Activated CD4-positive, alpha-beta T cell treated with anti-CD3 and anti-CD28 coated beads for 36 hours (primary cell): ENCODE measurements at regions of chr1 and their contacts with region 1.

Region 1: DNA sequence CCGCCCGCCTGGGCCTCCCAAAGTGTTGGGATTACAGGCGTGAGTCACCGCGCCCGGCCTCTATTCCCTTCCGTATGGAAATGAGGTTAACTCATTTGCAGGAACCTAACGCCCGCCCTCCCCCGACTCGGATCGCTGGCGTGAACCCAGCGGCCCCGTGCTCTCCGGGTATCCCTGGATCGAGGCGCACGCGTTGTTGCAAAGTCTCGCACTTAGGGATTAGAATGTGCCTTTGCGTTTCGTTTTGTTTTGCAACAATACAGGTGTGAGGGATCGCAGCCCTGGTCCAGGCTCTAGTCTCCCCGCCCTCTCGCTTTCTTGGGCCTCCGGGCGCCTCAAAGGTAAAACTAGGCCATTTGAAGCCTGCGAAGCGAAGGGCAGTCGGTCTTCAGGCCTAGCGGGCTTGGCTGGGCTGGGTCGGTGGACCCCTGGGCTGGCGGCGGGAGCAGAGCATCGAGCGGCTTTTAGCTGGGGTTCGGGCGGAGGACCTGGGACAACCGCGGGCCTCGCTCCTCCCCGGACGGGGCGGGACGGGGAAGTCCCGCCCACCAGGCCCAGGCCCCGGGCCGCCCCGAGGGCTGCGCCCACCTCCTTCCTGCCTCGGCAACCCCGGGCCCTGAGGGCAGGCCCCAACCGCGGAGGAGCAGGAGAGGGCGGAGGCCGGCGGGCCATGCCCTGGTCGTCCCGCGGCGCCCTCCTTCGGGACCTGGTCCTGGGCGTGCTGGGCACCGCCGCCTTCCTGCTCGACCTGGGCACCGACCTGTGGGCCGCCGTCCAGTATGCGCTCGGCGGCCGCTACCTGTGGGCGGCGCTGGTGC is at the start of gene XKR8:
- DNase-seq: peak; percentile 89
- ATAC-seq: peak; percentile 98
- H3K4me3 Mint-ChIP-seq: peak within 1 kb of the TSS; percentile 77
- H3K27ac Mint-ChIP-seq: peak within 1 kb of the TSS; percentile 84
- H3K4me1 Mint-ChIP-seq: peaks cover 17% of the 10 kb centered on the region
- H3K27me3 Mint-ChIP-seq: no peaks in the 10 kb centered on the region
- total RNA-seq, gene XKR8: 4.2 to 6.0 TPM

Region 2: DNA sequence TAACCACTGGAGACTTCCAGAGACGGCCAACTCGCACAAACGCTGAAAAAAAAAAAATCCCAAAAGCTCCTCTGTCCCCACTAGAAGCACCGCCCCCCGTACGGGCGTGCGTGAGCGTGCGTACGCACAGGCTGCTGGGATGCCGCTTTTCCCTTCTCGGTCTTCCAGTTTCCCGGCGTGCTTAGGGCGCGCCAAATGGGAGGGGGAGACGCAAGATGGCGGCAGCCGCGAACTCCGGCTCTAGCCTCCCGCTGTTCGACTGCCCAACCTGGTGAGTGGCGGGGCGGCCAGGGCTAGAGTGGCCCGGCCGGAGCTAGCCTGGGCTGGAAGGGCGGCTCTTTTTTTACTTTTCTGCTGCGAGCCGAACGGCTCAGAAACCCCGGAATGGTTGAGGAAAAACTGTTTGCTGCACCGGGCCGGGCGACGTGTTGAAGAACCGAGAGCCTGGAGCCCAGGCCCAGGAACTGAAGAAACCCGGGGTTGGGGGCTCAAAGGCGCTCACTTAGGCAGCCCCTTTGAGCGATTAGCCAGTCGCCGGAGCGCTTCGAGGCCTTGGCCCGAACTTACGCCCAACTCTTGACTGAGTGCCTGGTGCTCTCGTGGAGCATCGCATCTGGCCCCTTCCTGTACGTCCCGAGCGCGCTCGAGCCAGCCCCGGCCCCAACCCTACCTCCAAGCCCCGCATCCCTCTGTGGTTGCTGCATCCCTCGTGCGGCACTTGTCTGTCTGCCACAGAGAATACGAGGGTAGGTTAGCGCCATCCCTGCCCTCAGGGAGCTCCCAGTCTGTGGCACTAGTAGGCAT is 128.8 kb before region 1 on chr1 and contains the start of gene PPP1R8:
- CTCF ChIA-PET with region 1: no interaction called
- POLR2A ChIA-PET with region 1: no interaction called
- intact Hi-C with region 1: loop called in 1 of 2 experiments (anchors 1 kb)
- DNase-seq: peak; percentile 94
- ATAC-seq: peak; percentile 99
- H3K4me3 Mint-ChIP-seq: peak within 1 kb of the TSS; percentile 94
- H3K27ac Mint-ChIP-seq: peak within 1 kb of the TSS; percentile 94
- H3K4me1 Mint-ChIP-seq: peaks cover 40% of the 10 kb centered on the region
- H3K27me3 Mint-ChIP-seq: no peaks in the 10 kb centered on the region
- total RNA-seq, gene PPP1R8: 49.6 to 65.9 TPM

Region 3: DNA sequence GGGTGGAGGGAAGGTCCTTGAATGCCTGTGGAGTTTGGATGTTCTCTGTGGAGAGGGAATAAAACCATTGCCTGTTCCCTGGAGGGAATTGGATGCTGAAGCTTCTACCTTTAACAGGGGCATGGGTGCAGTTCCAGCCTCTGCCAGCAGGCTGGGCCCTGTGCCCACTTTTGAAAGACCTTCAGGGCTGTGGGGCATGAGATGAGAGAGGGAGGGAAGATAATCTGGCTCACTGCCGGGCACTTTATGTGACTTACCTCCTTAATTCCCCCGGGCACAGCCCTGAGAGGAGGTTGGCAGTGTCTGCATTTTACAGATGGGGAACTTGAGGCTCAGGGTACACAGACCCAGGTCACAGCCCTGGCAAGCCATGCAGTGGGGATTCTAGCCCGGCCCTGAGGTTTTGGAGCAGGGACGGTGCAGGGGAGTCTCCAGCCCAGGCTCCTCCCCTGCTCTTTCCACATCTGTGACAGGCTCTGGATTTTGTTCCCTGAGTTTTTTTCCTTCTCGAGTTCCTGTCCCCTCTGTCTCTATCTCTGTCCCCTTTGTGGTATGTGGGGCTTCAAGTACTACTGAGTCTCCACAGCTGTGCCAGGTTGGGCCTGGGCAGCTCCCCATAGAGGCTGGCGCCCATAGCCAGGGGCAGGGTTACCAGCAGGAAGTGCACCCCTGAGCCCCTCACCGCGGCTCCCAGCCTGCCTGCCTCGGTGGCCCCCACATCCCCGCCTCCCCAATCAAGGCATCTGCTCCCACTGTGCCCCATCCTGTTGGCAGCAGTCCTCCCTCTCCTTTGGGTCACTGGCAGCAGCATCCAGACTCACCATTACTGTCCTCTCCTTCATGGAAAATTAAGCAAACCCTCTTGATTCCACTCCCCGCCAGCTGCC is 101.3 kb before region 1 on chr1:
- CTCF ChIA-PET with region 1: interaction called, 5 read pairs
- POLR2A ChIA-PET with region 1: interaction called, 3 read pairs
- intact Hi-C with region 1: loop called in 1 of 2 experiments (anchors 5 kb)
- DNase-seq: peak; percentile 90
- ATAC-seq: peak; percentile 97
- H3K4me3 Mint-ChIP-seq: no peak overlapping the region
- H3K27ac Mint-ChIP-seq: no peak overlapping the region
- H3K4me1 Mint-ChIP-seq: peaks cover 9% of the 10 kb centered on the region
- H3K27me3 Mint-ChIP-seq: no peaks in the 10 kb centered on the region

Region 4: DNA sequence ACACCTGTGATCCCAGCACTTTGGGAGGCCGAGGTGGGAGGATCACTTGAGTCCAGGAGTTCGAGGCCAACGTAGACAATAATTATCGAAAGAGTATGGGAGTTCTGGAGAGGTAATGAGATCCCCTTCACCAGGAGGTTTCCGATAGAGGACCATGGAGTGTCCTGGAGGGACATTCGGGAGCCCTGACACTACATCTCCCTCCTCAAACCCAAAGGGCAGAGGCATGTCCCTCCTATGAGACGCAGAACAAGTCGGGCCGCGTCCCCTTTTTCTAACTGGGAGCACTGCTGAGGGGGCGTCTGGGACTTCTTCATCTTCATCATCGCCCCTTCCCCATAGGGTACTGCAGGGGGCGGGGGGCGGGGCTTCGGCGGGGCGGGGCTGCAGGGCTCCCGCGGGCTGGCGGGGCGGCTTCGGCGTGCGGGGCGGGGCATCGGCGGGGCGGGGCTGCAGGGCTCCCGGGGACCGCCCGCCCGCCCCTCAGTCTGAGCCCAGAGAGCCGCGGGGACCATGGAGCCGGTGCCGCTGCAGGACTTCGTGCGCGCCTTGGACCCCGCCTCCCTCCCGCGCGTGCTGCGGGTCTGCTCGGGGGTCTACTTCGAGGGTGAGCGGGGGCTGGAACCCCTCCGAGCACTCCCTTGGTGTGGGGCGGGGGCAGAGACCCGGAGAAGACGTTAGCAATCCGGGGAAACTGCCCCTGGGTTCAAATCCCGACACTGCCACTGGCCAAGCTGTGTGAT is 87.4 kb before region 1 on chr1 and contains the start of gene THEMIS2:
- CTCF ChIA-PET with region 1: no interaction called
- POLR2A ChIA-PET with region 1: no interaction called
- intact Hi-C with region 1: loop called in 1 of 2 experiments (anchors 1 kb)
- DNase-seq: peak; percentile 90
- ATAC-seq: peak; percentile 81
- H3K4me3 Mint-ChIP-seq: peak within 1 kb of the TSS; percentile 87
- H3K27ac Mint-ChIP-seq: peak within 1 kb of the TSS; percentile 83
- H3K4me1 Mint-ChIP-seq: peaks cover 36% of the 10 kb centered on the region
- H3K27me3 Mint-ChIP-seq: no peaks in the 10 kb centered on the region
- total RNA-seq, gene THEMIS2: 14.2 to 16.2 TPM

Region 5: GRCh38 chr1:28021064-28021463 is 61.5 kb after region 1 on chr1:
- CTCF ChIA-PET with region 1: no interaction called
- POLR2A ChIA-PET with region 1: no interaction called
- intact Hi-C with region 1: no loop called
- DNase-seq: no peak
- ATAC-seq: no peak
- H3K4me3 Mint-ChIP-seq: no peak overlapping the region
- H3K27ac Mint-ChIP-seq: no peak overlapping the region
- H3K4me1 Mint-ChIP-seq: peaks cover 7% of the 10 kb centered on the region
- H3K27me3 Mint-ChIP-seq: no peaks in the 10 kb centered on the region